ENCODE measurements at regions of chr14 and their contacts with region 1.

Region 1: DNA sequence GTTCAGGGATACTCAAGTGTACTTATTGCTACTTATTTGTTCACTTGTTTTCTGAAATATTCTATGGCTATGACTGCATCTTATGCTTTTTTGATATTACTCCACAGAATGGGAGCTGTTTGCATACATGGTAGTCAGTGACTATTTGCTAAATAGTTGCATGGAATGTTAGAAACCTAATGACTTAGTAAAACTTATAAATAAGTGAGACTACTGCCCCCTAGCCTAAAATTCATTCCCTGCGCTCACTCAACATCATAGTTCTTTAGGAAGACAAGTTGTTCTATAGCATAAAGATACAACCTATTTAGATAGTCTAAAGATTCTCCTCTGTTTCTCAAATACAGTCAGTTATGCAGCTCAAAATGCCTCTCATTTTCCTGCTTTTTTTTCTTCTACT is 305.5 kb downstream of the CEP128 start:
- DNase-seq: no peak
- H3K4me3 ChIP-seq: no peak overlapping the region
- H3K27ac ChIP-seq: peak overlapping the region; percentile 99
- H3K4me1 ChIP-seq: peaks cover 45% of the 10 kb centered on the region
- H3K27me3 ChIP-seq: no peaks in the 10 kb centered on the region
- CTCF ChIP-seq: 0 out of 2 replicates have a peak, but pooled peaks have one; percentile 21

Region 2: DNA sequence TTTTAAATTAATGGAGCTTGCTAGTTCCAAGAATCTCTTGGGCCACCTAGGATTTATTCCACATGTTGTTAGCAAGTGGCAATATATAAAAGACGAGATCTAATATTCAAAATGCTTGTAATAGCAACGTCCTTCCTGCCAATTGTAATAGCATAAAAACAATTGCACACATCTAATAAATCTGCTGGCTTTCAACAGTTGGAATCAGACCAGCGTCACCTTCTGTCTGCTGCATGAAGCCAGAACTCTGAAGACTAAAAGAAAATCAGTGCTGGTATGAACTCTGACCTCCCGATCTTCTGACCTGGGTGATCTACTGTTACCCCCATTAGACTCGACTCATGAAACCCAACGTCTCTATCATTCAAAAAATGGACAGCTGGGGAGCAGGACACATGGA is 525.4 kb before region 1 on chr14:
- CTCF ChIA-PET with region 1: no interaction called
- POLR2A ChIA-PET with region 1: no interaction called
- intact Hi-C with region 1: no loop called
- DNase-seq: no peak
- H3K4me3 ChIP-seq: no peak overlapping the region
- H3K27ac ChIP-seq: no peak overlapping the region
- H3K4me1 ChIP-seq: no peaks in the 10 kb centered on the region
- H3K27me3 ChIP-seq: no peaks in the 10 kb centered on the region
- CTCF ChIP-seq: no peak

Region 3: DNA sequence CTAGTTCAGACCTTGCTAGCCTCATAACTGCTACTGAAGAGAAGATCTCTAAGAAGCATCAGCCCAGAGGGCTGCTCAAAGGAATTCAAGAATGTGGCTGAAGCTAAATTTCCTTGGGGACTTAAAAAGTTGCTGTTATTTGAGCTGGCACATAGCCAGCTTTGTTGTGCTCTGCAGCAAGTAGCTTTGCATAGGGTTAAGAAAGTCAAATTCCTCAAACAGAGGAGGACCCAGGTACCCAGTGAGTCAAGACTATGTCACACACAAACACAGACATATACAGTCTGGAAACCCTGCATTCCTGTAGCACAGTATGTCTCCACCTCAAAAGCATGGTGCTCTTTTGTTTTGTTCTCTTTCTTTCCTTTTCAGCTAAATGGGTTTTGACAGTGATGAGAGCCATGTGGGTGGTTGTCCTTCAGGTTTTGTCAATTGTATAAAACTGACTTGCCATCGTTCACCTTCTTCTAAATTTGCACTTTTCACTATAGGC is 245.2 kb before region 1 on chr14:
- CTCF ChIA-PET with region 1: no interaction called
- POLR2A ChIA-PET with region 1: no interaction called
- intact Hi-C with region 1: loop called (anchors 1 kb)
- DNase-seq: peak; percentile 59 to 87
- H3K4me3 ChIP-seq: no peak overlapping the region
- H3K27ac ChIP-seq: peak overlapping the region; percentile 49
- H3K4me1 ChIP-seq: peaks cover 40% of the 10 kb centered on the region
- H3K27me3 ChIP-seq: no peaks in the 10 kb centered on the region
- CTCF ChIP-seq: no peak

Region 4: GRCh38 chr14:80425686-80426085 is 210.4 kb before region 1 on chr14:
- CTCF ChIA-PET with region 1: no interaction called
- POLR2A ChIA-PET with region 1: no interaction called
- intact Hi-C with region 1: loop called (anchors 1 kb)
- DNase-seq: peak; percentile 54 to 99
- H3K4me3 ChIP-seq: no peak overlapping the region
- H3K27ac ChIP-seq: peak overlapping the region; percentile 92
- H3K4me1 ChIP-seq: peaks cover 29% of the 10 kb centered on the region
- H3K27me3 ChIP-seq: no peaks in the 10 kb centered on the region
- CTCF ChIP-seq: no peak

Region 5: DNA sequence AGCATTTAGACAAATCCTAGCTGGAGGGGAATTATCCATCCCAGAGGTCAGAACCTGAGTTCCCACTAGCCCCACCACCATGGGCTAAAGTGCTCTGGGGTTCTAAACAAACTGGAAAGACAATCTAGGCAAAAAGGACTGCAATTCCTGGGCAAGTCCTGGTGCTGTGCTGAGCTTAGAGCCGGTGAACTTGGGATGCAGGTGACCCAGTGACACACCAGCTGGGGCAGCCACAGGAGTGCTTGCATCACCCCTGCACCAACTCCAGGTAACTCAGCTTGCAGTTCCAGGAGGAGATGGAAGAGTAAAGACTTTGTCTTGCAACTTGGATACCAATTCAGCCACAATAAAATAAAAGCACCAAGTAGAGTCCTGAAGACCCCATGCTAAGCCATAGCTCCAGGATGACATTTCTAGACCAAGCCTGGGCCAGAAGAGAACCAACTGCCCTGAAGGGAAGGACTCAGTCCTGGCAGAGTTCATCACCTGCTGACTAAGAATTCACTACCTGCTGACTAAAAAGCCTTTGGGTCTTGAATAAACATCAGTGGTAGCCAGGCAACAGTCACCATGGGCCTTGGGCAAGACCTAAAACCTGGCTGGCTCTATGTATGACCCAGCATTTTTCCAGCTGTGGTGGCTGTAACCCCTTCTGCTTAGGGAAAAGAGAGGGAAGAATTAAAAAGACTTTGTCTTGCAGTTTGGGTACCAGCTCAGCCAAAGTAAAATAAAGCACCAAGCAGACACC is 201.3 kb before region 1 on chr14:
- CTCF ChIA-PET with region 1: no interaction called
- POLR2A ChIA-PET with region 1: no interaction called
- intact Hi-C with region 1: loop called (anchors 1 kb)
- DNase-seq: peak; percentile 74 to 94
- H3K4me3 ChIP-seq: no peak overlapping the region
- H3K27ac ChIP-seq: peak overlapping the region; percentile 86
- H3K4me1 ChIP-seq: peaks cover 39% of the 10 kb centered on the region
- H3K27me3 ChIP-seq: no peaks in the 10 kb centered on the region
- CTCF ChIP-seq: no peak

Region 6: GRCh38 chr14:80678436-80678835 is 42.4 kb after region 1 on chr14:
- CTCF ChIA-PET with region 1: no interaction called
- POLR2A ChIA-PET with region 1: no interaction called
- intact Hi-C with region 1: no loop called
- DNase-seq: no peak
- H3K4me3 ChIP-seq: no peak overlapping the region
- H3K27ac ChIP-seq: no peak overlapping the region
- H3K4me1 ChIP-seq: no peaks in the 10 kb centered on the region
- H3K27me3 ChIP-seq: no peaks in the 10 kb centered on the region
- CTCF ChIP-seq: no peak

Region 7: DNA sequence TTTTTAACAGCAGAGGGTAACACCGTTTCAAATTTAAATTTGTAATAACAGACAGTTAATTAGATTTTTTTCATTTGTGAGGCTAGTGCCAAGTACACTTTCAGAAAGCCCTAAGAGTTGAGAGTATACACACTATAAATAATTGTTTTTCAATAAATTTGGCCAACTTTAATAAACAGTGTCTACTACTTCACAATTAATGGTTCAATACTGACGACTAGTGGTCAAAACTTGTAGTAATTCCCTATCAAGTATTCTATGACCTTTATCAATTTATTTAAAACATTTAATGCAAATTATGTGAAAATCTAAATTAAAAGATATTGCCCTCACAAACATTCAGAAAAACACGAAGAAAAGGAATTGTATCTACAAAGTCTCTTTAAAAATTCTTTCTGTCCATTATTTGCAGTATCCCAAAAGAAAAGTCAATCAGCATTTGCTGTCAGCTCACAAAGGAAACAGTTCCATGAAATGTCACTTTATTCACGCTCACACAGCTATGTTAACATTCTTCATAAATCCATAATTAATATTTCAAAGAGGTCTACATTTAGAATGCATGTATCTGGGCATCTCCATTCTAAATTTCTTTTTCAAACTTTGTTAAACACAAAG is 214.2 kb after region 1 on chr14:
- CTCF ChIA-PET with region 1: no interaction called
- POLR2A ChIA-PET with region 1: no interaction called
- intact Hi-C with region 1: loop called (anchors 2 kb)
- DNase-seq: no peak
- H3K4me3 ChIP-seq: no peak overlapping the region
- H3K27ac ChIP-seq: no peak overlapping the region
- H3K4me1 ChIP-seq: peaks cover 7% of the 10 kb centered on the region; the same call in 1 of the 2 replicates
- H3K27me3 ChIP-seq: no peaks in the 10 kb centered on the region
- CTCF ChIP-seq: peak; percentile 94